KBM-7 (cell line): ENCODE measurements at regions of chr12 and their contacts with region 1.

Region 1: DNA sequence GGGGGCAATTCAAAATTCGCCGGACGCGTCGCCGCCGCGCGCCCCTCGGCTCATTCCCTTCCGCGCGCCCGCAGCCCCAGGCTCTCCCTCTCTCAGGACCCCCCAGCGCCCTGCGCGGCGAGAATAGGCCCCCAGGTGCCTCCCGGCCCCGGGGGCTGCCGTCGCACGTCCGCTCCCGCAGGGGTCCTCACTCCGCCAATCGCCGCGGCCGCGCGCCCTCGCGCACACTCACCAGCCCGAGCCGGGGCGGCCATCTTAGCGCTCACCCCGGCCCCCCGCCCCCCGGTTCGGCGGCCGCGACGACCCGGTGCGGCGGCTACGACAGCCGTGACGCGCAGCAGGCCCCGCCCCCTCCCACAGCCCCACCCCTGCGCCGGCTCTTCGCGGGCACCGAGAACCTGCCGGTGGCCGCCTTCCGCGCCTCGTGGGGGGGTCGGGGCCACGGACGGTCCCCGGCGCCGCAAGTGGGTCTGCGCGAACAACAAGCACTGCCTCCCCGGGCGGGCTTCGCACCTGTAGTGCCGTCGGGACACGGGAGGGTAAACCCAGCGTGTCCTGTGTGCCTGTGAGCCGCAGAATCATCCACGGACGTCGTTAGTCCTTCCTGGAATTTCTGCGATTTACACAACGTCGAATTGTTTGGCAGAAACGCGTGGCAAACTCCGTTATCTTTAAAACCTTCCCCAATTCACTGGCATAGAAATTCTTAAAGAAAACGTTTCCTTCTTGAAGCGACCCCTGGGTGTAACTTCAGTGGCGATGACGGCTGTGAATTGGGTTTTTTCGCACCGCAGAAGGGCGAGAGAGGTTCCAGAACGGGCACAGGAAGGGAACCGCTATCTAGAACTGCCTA is 2.5 kb downstream of the USP44 start:
- DNase-seq: no peak

Region 2: DNA sequence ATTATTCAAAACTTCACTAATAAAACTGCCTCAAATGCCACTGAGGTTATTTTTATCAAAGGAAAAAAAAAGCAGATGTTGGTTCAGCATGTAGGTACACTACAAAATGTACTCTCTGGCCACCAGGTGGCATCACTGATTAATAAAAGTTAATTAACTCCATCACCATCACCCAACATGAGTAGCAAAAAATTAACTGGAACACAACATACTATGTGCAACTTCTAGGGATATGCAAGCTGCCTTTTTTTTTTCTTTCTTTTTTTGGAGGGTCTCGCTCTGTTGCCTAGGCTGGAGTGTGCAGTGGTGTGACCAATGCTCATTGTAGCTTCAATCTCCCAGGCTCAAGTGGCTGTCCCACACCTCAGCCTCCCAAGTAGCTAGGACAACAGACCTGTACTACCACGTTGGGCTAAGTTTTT is 431.6 kb before region 1 on chr12:
- in situ Hi-C with region 1: loop called (anchors 25 kb)
- DNase-seq: peak; percentile 80

Region 3: DNA sequence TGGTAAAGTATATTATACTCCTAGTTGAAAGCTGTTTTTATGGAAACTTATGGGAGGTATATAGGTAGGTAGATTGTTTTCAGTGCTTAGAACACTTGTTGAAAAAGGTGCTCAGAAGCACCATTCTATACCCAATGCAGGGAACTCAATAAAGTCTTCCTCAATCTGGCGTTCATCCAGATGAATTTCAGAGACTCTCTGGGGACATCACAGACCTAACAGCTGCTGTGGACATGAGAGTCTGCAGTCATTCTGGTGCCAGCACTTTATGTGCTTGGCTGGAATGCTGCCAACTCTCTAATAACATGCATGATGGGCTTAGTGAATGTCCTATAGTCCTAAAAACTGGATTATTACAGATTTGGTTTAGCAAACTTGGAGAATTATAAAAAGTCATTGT is 125.9 kb after region 1 on chr12:
- in situ Hi-C with region 1: no loop called
- DNase-seq: no peak